ENCODE measurements at regions of chr2 and their contacts with region 1.

Region 1: DNA sequence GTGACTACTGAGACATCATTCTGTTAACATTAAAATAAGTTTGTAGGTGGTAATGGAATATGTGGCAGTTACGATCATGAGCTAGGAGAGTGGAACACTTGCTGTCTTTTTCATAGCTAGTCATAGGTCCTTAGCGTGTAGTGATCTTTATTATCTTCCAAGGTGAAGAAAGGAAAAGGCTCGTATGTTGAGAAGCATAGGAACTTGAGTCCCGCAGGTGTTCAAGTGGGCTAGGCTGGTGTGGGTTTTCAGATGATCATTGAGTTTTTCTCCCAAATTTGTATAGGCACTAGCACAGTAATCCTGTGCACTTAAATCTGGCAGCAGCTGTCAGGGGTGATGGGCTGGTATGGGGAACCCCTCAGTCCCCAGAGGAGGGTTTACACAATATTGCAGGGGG is 10.9 kb downstream of the SLC20A1 start:
- DNase-seq: no peak
- H3K4me3 Mint-ChIP-seq: no peak overlapping the region
- H3K27ac Mint-ChIP-seq: no peak overlapping the region
- H3K4me1 Mint-ChIP-seq: peaks cover 54% of the 10 kb centered on the region
- H3K27me3 Mint-ChIP-seq: no peaks in the 10 kb centered on the region

Region 2: GRCh38 chr2:112666764-112667122 is 10.1 kb after region 1 on chr2:
- intact Hi-C with region 1: loop called (anchors 1 kb)
- DNase-seq: no peak
- H3K4me3 Mint-ChIP-seq: no peak overlapping the region
- H3K27ac Mint-ChIP-seq: peak overlapping the region; percentile 60
- H3K4me1 Mint-ChIP-seq: peaks cover 2% of the 10 kb centered on the region
- H3K27me3 Mint-ChIP-seq: no peaks in the 10 kb centered on the region

Region 3: GRCh38 chr2:112784199-112785189 is 127.8 kb after region 1 on chr2 and contains the start of gene IL1A:
- intact Hi-C with region 1: no loop called
- DNase-seq: no peak
- H3K4me3 Mint-ChIP-seq: peak within 1 kb of the TSS; percentile 57
- H3K27ac Mint-ChIP-seq: peak within 1 kb of the TSS; percentile 51
- H3K4me1 Mint-ChIP-seq: peaks cover 10% of the 10 kb centered on the region
- H3K27me3 Mint-ChIP-seq: peaks cover 10% of the 10 kb centered on the region
- total RNA-seq, gene IL1A: 9.4 and 10.2 TPM in 2 replicates

Region 4: DNA sequence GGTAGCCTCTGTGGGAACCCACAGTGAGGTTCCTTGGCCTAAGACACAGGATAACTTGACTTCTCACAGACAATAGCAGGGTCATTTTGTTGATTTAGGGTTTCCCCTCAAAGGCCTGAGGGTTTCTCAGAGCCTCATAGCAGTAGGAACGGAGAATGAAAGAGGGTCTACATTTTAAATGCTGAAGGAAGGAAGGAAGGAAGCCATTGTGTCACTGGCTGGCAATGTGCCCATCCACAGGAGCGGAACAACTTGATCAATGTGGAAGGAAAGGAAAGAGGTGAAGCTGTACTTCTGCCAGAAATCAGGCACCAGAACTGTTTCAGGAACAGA is 174.8 kb after region 1 on chr2:
- intact Hi-C with region 1: no loop called
- DNase-seq: no peak
- H3K4me3 Mint-ChIP-seq: no peak overlapping the region
- H3K27ac Mint-ChIP-seq: no peak overlapping the region
- H3K4me1 Mint-ChIP-seq: peaks cover 4% of the 10 kb centered on the region
- H3K27me3 Mint-ChIP-seq: peaks cover 17% of the 10 kb centered on the region

Region 5: DNA sequence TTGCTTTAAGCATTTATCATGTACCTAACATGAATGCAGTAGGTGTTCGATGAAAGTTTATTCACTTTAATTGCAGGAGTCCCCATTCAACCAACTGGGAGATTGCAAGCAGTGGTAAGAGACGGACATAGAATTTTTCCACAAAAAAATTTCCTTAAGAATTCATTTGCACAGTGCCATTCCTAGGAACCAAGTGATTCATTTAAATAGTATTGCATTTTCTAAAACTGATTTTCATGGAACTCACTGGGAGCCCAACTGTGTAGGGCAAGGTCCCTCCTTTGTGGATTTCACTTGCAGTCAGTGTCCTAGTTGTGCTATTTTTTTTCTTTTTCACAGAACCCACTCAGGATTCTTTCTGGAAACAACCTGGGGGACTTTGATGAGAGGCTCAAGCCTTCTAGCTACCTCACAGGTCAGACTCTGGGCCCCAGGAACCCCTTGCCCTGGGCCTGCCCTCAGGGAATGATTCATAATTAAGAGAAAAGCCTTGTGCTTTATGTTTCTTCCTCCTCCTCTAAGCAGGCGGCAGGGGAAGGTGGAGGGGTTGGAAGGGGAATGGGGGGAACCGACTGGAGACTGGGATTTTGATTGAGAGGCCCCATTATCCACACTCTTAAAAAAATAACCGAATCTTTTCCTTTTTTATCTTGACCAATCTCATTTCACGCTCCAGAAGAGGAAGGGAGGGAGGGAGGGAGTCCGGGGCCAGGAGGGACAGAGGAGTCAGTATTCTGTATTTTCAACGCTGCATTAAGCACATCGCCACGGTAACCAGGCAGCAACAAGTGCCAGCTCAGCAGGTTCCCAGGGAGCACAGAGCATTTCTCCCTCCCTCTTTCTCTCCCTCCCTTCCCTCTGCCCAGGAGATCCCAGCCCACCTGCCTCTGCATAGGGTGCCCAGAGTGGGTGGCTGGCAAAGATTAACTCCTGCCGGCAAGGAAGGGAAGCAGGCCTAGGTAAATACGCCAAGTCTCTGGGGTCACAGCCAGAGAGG is 568.9 kb after region 1 on chr2:
- intact Hi-C with region 1: no loop called
- DNase-seq: no peak
- H3K4me3 Mint-ChIP-seq: no peak overlapping the region
- H3K27ac Mint-ChIP-seq: no peak overlapping the region
- H3K4me1 Mint-ChIP-seq: peaks cover 10% of the 10 kb centered on the region
- H3K27me3 Mint-ChIP-seq: peaks cover 4% of the 10 kb centered on the region

Measured in activated CD4-positive, alpha-beta T cell treated with anti-CD3 and anti-CD28 coated beads, Interleukin-2, amount 10 ng/mL, durations not matched to agents 24 days and 14 days (primary cell).